PC-9 (cell line): ENCODE measurements at regions of chr12 and their contacts with region 1.

Region 1: GRCh38 chr12:64286521-64286920 is 64.4 kb upstream of the KICS2 start:
- DNase-seq: no peak
- H3K4me3 ChIP-seq: no peak overlapping the region
- H3K27ac ChIP-seq: no peak overlapping the region
- H3K4me1 ChIP-seq: no peaks in the 10 kb centered on the region
- H3K27me3 ChIP-seq: no peaks in the 10 kb centered on the region
- CTCF ChIP-seq: no peak

Region 2: GRCh38 chr12:64323476-64324225 is 37.1 kb after region 1 on chr12:
- CTCF ChIA-PET with region 1: interaction called, 11 read pairs
- POLR2A ChIA-PET with region 1: no interaction called
- intact Hi-C with region 1: no loop called
- DNase-seq: no peak
- H3K4me3 ChIP-seq: no peak overlapping the region
- H3K27ac ChIP-seq: no peak overlapping the region
- H3K4me1 ChIP-seq: no peaks in the 10 kb centered on the region
- H3K27me3 ChIP-seq: no peaks in the 10 kb centered on the region
- CTCF ChIP-seq: no peak